Common myeloid progenitor, CD34-positive (primary cell): ENCODE measurements at regions of chr17 and their contacts with region 1.

Region 1: DNA sequence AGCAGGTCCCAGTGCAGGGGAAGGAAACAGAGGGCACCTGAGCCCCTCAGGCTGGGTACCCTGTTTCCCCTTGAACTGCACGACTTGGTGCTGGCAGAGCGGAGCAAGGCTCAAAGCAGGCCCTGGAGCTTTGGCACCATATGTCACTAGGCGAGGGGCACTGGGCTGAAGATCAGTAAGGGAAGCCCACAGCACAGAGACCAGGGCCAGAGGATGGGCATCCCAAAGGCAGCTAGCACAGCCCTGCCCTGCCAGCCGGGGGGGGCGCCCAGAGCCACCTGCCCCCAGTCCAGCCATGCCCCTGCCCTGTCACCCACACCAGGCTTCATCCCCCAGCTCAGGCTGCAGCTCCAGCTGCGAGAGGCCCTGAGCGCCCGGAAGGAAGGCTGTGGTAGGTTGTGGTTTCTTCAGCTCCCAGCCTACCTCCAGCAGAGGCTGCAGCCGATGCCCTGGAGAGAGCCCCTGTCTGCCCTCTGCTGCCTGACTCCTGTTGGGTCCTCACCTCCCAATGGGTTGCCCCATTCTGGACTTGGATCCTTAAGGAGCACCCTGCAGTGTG is 10.9 kb downstream of the NHERF1 start:
- DNase-seq: peak; percentile 83 to 94 (median 93)
- H3K4me3 ChIP-seq: peak overlapping the region in 6 of 7 experiments; percentile 2 to 65 (median 44)
- H3K27ac ChIP-seq: peak overlapping the region; percentile 5 to 76
- H3K4me1 ChIP-seq: peaks cover 8 to 76% (median 66%) of the 10 kb centered on the region in 4 experiments
- H3K27me3 ChIP-seq: no peaks in the 10 kb centered on the region

Region 2: DNA sequence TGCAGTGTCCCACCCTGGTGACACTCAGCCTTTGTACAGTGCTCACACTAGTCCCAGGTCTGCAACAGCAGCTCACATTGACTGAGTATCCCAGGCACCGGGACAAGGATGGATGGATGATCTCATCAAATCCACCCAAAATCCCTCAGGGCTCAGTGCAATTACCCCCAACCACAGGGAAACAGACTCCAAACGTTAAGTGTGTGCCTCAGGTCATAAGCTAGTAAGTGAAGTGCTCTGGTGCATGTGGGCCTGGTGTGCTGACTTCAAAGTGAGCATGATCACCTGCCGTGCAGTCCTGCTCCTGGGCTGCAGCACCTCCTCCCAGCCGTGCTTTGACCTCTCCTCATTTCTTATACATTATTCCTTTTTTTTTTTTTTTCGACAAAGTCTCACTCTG is 104.6 kb before region 1 on chr17:
- CTCF ChIA-PET with region 1: interaction called, 21 read pairs
- POLR2A ChIA-PET with region 1: interaction called, 4 read pairs
- DNase-seq: no peak
- H3K4me3 ChIP-seq: no peak overlapping the region
- H3K27ac ChIP-seq: no peak overlapping the region
- H3K4me1 ChIP-seq: peaks cover 0 to 6% (median 3%) of the 10 kb centered on the region in 4 experiments
- H3K27me3 ChIP-seq: peaks cover 0 to 9% (median 4%) of the 10 kb centered on the region in 5 experiments

Region 3: DNA sequence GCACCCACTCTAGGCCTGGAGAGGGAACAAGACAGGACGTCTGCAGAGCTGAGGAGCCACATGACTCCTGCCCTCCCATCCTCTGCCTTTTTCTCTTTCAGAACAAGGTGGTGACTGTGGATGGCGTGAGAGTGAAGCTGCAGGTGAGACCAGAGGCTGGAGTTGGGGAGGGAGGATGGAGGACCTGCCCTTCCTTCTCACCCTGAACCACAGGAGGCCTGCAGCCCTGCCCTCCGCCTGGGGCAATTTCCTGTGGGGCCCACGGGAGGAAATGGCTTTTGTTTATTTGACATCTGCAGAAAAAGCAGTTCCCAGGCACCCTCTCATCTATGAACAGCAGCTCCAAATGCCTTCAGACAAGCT is 17.2 kb before region 1 on chr17:
- CTCF ChIA-PET with region 1: interaction called, 152 read pairs
- POLR2A ChIA-PET with region 1: interaction called, 71 read pairs
- DNase-seq: peak; percentile 64 to 89 (median 82)
- H3K4me3 ChIP-seq: peak overlapping the region in 2 of 7 experiments; percentile 26 to 40
- H3K27ac ChIP-seq: peak overlapping the region in 1 of 2 experiments; percentile 74
- H3K4me1 ChIP-seq: peaks cover 18 to 98% (median 91%) of the 10 kb centered on the region in 4 experiments
- H3K27me3 ChIP-seq: no peaks in the 10 kb centered on the region

Region 4: GRCh38 chr17:74748529-74749365 is 10.6 kb before region 1 on chr17 and contains the start of gene NHERF1:
- CTCF ChIA-PET with region 1: interaction called, 152 read pairs
- POLR2A ChIA-PET with region 1: interaction called, 71 read pairs
- DNase-seq: peak; percentile 90 to 94 (median 94)
- H3K4me3 ChIP-seq: peak within 1 kb of the TSS; percentile 81 to 98 (median 96)
- H3K27ac ChIP-seq: peak within 1 kb of the TSS; percentile 54 to 81
- H3K4me1 ChIP-seq: peaks cover 18 to 84% (median 80%) of the 10 kb centered on the region in 4 experiments
- H3K27me3 ChIP-seq: no peaks in the 10 kb centered on the region

Region 5: DNA sequence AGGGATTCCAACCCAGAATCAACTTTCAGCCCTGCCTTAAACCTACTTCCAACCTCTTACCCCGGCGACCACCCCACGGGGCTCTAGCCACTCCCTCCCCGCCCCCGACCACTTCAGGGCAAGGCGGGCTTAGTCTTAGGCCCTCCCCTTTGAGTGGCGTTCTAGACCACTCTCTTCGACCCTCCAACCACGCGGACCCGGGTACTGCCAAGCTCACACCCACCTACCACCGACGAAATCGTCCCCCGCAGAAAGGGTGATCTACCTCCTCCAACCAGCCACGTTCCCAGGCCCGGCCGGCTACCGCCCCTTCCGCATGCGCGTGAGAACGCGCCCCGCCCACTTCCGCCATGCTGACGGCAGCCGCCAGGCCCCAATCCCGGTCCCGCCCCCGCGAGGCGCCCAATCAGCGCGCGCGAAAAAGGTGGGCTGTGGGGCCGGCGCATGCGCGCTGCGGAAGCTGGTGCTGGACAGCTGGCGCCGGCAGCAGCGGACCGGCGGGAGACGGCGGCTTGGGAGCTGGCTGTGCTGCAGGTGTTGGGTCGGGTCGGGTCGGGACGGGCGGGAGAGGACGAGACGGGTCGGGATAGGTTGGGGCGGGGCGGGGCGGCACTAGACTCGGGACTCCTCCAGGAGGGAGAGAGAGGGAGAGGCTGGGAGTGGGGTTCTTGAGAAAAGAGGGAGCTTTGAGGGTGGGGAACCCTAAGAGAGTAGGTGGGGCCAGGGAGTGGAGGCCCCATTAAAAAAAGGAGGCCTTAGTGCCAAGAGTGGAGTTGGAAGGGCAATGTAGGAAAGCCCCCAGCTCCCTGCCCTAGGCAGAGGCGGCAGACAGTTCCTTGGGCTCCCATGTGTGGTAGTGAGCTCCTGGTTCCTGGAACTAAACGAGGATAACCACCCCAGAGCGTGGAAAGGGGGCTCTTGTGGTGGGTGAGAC is 17.0 kb after region 1 on chr17 and contains the start of gene NAT9:
- CTCF ChIA-PET with region 1: interaction called, 175 read pairs
- POLR2A ChIA-PET with region 1: interaction called, 14 read pairs
- DNase-seq: peak; percentile 95 to 98 (median 97)
- H3K4me3 ChIP-seq: peak within 1 kb of the TSS; percentile 38 to 96 (median 82)
- H3K27ac ChIP-seq: peak within 1 kb of the TSS; percentile 73 to 86
- H3K4me1 ChIP-seq: peaks cover 20 to 56% (median 45%) of the 10 kb centered on the region in 4 experiments
- H3K27me3 ChIP-seq: no peaks in the 10 kb centered on the region

Region 6: DNA sequence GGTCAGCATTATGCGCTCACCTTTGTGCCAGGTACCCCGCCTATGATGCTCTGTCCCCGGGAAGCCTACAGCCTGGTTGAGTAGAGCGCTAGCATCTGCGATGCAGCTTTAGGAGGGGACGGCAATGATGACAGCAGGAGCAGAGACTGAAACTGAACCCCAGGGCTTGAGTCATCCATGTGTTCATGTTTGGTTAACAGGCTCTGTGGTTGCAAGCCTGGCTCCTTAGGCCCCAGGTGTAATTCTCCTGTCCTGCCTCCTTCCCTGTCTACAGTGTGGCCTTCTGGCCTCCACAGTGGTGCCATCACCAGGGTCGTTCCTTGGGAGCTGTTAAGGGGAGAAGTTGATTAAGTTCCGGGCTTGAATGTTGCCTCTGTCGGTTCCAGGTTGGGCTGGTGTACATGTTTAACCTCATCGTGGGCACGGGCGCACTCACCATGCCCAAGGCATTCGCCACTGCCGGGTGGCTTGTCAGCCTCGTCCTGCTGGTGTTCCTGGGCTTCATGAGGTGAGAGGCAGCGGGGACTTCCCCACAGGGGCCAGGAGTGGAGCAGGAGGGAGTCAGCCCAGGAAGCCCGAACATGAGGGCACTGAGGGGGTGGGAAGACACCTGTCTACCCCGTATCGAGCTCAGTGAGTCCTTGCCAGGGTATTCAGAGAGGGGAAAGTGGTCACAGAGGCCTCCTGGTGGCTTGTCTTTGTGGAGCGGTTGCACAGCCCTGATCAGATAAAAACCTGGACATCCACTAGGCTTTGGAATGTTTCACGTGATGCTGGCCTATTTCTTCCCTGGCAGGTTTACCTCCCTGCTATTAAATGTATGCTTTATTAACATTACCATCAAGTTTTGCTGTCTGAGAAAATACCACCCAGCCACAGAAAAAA is 26.0 kb after region 1 on chr17:
- CTCF ChIA-PET with region 1: interaction called, 20 read pairs
- POLR2A ChIA-PET with region 1: interaction called, 14 read pairs
- DNase-seq: peak in 2 of 3 donors; percentile 32 to 35
- H3K4me3 ChIP-seq: no peak overlapping the region
- H3K27ac ChIP-seq: no peak overlapping the region
- H3K4me1 ChIP-seq: peaks cover 12 to 50% (median 44%) of the 10 kb centered on the region in 4 experiments
- H3K27me3 ChIP-seq: no peaks in the 10 kb centered on the region